ENCODE measurements at regions of chrX and their contacts with region 1.

Region 1: GRCh38 chrX:13094828-13095341 is 50.5 kb upstream of the FAM9C start:
- DNase-seq: no peak
- H3K4me3 Mint-ChIP-seq: no peak overlapping the region
- H3K27ac Mint-ChIP-seq: peak overlapping the region; percentile 69
- H3K4me1 Mint-ChIP-seq: peaks cover 63% of the 10 kb centered on the region
- H3K27me3 Mint-ChIP-seq: no peaks in the 10 kb centered on the region

Region 2: DNA sequence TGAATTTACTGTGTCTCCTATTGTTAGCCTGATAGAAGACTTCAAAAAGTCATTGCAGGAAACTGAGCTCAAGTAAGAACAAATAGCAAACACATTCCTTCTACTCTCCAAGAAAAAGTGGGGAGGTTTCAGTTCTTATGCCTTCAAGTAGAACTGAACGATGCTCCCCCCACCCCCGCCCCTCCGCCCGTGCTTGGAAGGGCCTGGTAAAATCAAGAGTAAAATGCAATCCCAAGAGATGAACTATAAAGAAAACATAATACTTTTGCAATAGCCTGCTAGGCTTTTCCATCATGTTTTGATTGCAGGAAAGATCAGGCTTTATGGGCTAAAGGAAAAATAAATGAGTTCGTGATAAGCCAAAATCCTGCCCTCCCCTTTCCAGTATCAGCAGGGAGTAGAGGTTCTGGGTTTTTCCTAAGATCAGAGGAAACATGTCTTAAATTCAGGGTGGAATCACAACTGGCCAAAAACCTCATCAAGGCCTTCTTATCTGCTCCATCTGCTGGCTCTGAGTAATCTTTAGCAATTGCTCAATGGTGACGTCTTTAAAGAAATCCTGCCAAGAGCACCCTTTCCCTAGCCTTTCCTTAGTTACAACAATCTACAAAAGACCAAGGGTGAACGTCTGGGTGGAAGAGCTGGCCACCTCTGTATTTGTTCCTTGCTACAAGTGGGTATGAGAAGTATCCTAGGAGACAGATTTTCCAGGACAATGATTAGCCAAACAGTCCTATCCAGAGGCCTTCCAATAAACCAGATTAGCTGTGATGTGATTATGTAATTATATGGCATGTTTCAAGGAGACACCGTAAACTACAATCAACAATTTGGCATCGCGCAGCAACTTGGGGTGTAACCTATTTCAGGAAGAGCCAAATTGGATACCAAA is 15.8 kb after region 1 on chrX:
- intact Hi-C with region 1: no loop called
- DNase-seq: no peak
- H3K4me3 Mint-ChIP-seq: no peak overlapping the region
- H3K27ac Mint-ChIP-seq: no peak overlapping the region
- H3K4me1 Mint-ChIP-seq: peaks cover 13% of the 10 kb centered on the region
- H3K27me3 Mint-ChIP-seq: no peaks in the 10 kb centered on the region

Region 3: DNA sequence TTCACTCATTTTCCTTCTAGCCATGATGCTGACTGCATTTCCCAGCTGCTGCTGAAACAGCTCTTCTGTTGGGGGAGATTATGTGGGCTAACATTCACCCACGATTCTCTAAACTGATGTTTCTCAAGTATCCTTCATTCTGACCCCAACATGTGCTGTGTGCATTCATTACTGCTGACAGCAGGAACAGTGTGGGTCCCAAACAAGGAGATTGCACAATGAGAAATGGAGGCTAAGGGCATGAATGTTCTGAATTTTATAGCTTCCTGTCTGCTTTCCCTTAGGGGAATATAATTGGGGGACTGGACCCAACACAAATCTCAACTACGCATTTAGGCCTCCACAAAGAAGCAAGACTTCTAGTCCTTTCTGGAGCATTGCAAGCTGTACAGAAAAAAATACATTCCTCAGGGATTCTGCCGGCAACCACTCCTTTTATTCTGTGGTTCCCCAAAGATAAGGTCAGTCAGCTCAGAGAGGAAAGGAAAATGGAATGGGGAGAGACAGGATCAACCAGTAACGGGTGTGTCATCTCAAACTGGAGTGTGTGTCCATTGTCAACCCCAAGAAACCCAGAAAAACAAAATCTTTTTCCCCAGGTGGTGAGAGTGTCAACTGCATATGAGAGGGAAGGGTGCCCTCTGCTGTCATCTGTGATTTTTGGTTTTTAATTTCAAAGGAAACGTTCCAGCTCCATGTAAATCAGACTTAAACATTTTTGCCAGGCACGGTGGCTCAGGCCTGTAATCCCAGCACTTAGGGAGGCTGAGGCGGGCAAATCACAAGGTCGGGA is 393.0 kb after region 1 on chrX:
- intact Hi-C with region 1: loop called (anchors 1 kb)
- DNase-seq: peak; percentile 14
- H3K4me3 Mint-ChIP-seq: no peak overlapping the region
- H3K27ac Mint-ChIP-seq: peak overlapping the region; percentile 81
- H3K4me1 Mint-ChIP-seq: peaks cover 11% of the 10 kb centered on the region
- H3K27me3 Mint-ChIP-seq: no peaks in the 10 kb centered on the region

Measured in activated T-helper 2 cell treated with anti-CD3 and anti-CD28 coated beads, Interferon-gamma antibody, Interleukin-2, Interleukin-4, amounts not matched to agents 10 μg/mL and 5 μg/mL and 100 μg/mL, durations not matched to agents 14 hours and 24 hours and 36 hours (primary cell).